T-cell (primary cell): ENCODE measurements at regions of chr1 and their contacts with region 1.

Region 1: GRCh38 chr1:26111530-26112406 is at the start of gene PDIK1L:
- DNase-seq: peak; percentile 89 to 98 (median 94)
- ATAC-seq: peak; percentile 86 to 89 (median 88)
- H3K4me3 ChIP-seq: peak within 1 kb of the TSS; percentile 87 to 99
- H3K4me3 Mint-ChIP-seq: peak within 1 kb of the TSS; percentile 85 to 95 (median 91)
- H3K27ac ChIP-seq: peak within 1 kb of the TSS; percentile 34
- H3K27ac Mint-ChIP-seq: peak within 1 kb of the TSS; percentile 90 to 94
- H3K4me1 ChIP-seq: peaks cover 7 to 16% of the 10 kb centered on the region in 2 experiments
- H3K4me1 Mint-ChIP-seq: peaks cover 26 to 39% (median 36%) of the 10 kb centered on the region in 3 donors
- H3K27me3 ChIP-seq: no peaks in the 10 kb centered on the region
- H3K27me3 Mint-ChIP-seq: no peaks in the 10 kb centered on the region
- total RNA-seq, gene PDIK1L: 8.8 to 23.6 (median 19.1) TPM

Region 2: GRCh38 chr1:26145041-26145959 is 33.5 kb after region 1 on chr1:
- CTCF ChIA-PET with region 1: interaction called, 6 to 17 read pairs
- POLR2A ChIA-PET with region 1: no interaction called
- DNase-seq: peak; percentile 28 to 88 (median 65)
- ATAC-seq: peak; percentile 81 to 96 (median 88)
- H3K4me3 ChIP-seq: no peak overlapping the region
- H3K4me3 Mint-ChIP-seq: no peak overlapping the region
- H3K27ac ChIP-seq: no peak overlapping the region
- H3K27ac Mint-ChIP-seq: peak overlapping the region in 1 of 2 donors; percentile 61
- H3K4me1 ChIP-seq: peaks cover 0 to 3% of the 10 kb centered on the region in 2 experiments
- H3K4me1 Mint-ChIP-seq: peaks cover 6 to 7% (median 6%) of the 10 kb centered on the region in 3 donors
- H3K27me3 ChIP-seq: peaks cover 0 to 21% of the 10 kb centered on the region in 2 experiments
- H3K27me3 Mint-ChIP-seq: peaks cover 4 to 14% of the 10 kb centered on the region in 2 donors

Region 3: GRCh38 chr1:26190373-26190987 is 78.7 kb after region 1 on chr1 and contains the start of gene CATSPER4:
- CTCF ChIA-PET with region 1: no interaction called
- POLR2A ChIA-PET with region 1: interaction called in 1 of 2 experiments, 13 read pairs
- DNase-seq: peak in 3 of 35 experiments; percentile 7 to 39 (median 10)
- ATAC-seq: peak in 2 of 4 experiments; percentile 46 to 53
- H3K4me3 ChIP-seq: no peak within 1 kb of the TSS
- H3K4me3 Mint-ChIP-seq: no peak within 1 kb of the TSS
- H3K27ac ChIP-seq: no peak within 1 kb of the TSS
- H3K27ac Mint-ChIP-seq: no peak within 1 kb of the TSS
- H3K4me1 ChIP-seq: peaks cover 0 to 7% of the 10 kb centered on the region in 2 experiments
- H3K4me1 Mint-ChIP-seq: peaks cover 0 to 15% (median 10%) of the 10 kb centered on the region in 3 donors
- H3K27me3 ChIP-seq: peaks cover 0 to 2% of the 10 kb centered on the region in 2 experiments
- H3K27me3 Mint-ChIP-seq: peaks cover 0 to 2% of the 10 kb centered on the region in 2 donors
- total RNA-seq, gene CATSPER4: not detected